ENCODE measurements at regions of chr10 and their contacts with region 1.

Region 1: DNA sequence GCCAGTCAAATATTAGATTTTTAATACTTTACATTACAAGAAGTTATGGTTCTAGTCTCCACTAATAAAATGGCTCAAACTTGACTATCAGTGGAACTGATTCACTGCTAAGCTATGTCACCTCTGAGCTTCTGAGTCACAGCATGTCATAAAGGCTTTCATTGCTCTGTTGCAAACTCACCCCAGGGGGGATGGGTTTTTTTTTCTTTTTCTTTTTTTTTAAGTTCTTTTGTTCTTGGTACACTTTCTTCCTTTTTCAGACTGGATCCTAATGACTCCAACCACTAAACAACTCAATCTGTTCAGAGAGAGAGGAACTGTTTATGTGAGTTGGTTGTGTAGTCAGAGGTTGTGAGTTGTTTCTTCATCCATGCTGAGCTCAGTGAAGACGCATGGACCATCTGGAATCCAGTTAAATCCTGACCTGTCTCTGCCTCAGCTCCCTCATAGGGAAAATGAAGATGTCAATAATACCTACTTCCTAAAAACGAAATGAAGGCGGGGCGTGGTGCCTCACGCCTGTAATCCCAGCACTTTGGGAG is 11.0 kb downstream of the MYOF start:
- DNase-seq: peak; percentile 88 to 96
- ATAC-seq: peak; percentile 59 to 60
- H3K4me3 ChIP-seq: no peak overlapping the region
- H3K27ac ChIP-seq: peak overlapping the region; percentile 92 to 93
- H3K4me1 ChIP-seq: peaks cover 91% of the 10 kb centered on the region
- CTCF ChIP-seq: no peak
- EP300 ChIP-seq: peak; percentile 84 to 92; a peak in 3 of 5 replicates
- POLR2A ChIP-seq: no peak
- RAD21 ChIP-seq: peak; percentile 19 to 52

Region 2: DNA sequence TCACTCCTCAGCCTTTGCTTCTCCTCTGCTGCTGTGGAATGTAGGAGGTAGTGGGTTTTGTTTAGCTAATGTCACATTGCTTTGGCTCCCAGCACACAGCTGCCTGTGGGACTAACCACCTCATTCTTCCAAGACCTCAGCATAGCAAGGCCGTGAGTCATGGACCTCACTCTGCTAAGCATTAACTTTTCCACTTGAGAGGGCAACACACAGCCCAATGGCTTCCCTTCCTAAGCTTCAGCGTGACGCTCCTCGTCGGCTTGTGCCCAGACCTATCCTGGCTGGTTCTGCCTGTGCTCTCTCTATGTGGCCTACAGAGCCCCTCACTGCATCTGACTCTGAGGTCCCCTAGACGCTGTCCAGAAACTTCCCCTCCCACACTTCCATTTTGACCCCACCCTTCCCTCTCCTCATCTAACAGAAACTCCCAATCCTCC is 12.3 kb before region 1 on chr10:
- CTCF ChIA-PET with region 1: interaction called, 45 read pairs
- POLR2A ChIA-PET with region 1: interaction called, 52 read pairs
- DNase-seq: peak; percentile 91 to 99
- ATAC-seq: peak; percentile 90 to 96
- H3K4me3 ChIP-seq: no peak overlapping the region
- H3K27ac ChIP-seq: peak overlapping the region; percentile 96 to 99
- H3K4me1 ChIP-seq: peaks cover 84% of the 10 kb centered on the region
- CTCF ChIP-seq: no peak
- EP300 ChIP-seq: peak; percentile 61 to 82; a peak in 2 of 5 replicates
- POLR2A ChIP-seq: no peak
- RAD21 ChIP-seq: peak; percentile 41 to 45

Region 3: DNA sequence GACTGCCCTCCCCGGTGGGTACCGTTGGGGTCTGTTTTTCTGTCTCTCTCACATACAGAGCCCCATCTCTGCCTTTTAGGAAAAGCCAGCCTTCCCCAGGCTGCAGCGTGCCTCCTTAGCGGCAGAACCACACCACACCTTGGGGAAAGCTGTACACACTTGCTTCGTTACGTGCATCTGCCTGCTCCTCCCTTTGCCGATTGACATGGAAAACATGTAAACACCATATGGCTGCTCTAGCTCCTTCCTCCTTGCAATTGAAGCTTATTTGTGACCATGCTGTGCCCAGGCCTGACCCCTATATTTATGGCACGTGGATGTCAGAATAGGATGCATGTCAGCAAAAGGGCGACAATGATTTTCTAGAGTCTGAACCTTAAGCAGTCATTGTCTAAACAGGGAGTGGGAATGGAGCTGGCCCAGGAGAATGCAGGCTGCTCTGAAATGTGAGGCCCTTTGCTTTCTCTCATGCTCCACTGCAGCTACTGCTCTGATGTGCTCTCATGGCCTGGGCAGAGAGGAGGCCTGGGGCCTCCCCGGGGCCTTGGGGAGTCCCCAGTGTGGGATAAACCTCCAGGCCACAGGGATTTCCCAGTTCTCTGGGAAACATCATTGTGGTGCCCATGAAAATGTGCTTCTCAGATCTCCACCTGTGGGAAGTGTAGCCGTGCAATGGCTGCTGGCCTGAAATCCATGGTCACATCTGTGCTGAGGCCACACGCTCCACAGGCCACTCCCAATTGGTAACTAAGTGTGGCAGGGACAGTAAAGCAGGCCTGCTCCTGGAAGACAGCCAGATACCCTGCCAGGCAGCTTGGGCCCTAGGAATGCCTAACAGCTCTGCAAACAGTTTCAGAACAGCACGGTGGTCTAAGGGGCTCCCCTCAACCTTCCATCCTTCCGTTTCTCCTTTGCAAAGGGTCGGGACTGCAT is 159.7 kb after region 1 on chr10:
- CTCF ChIA-PET with region 1: no interaction called
- POLR2A ChIA-PET with region 1: no interaction called
- DNase-seq: no peak
- ATAC-seq: peak in 1 of 2 experiments; percentile 30; a peak in 3 of 6 replicates
- H3K4me3 ChIP-seq: no peak overlapping the region
- H3K27ac ChIP-seq: no peak overlapping the region
- H3K4me1 ChIP-seq: no peaks in the 10 kb centered on the region
- CTCF ChIP-seq: no peak
- EP300 ChIP-seq: no peak
- POLR2A ChIP-seq: no peak
- RAD21 ChIP-seq: no peak